ENCODE measurements at regions of chr3 and their contacts with region 1.

Region 1: DNA sequence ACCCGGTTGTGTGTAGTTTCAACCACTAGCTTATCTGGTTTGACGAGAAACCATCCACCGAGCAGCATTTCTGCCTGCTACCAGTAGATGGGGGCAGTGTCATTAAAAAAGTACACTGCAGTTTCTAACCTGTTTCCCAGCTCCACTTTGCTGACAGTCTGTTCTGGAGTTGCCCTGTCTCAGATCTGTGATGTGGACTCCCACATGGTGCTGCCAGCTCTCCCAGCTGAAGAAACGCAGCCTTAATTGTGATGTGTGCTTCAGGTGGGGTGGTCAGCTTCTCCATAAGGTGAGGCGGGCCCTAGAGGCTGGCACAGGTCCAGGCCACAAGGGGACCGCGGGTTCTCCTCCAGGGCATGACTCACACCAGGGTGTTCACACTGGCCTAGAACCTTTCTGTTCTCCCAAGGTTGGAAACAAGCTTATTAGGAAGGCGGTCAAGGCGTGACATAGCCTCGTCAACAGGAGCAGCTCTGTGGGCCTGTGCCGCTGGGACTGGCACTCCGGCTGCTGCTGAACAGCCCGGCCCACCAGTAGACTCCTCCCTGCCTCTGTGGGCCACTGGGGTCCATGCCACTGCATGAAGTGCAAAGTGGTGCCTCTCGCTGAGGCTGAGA is 2.9 kb upstream of the FAM43A start:
- DNase-seq: peak; percentile 84
- ATAC-seq: peak; percentile 68
- H3K4me3 Mint-ChIP-seq: no peak overlapping the region
- H3K27ac Mint-ChIP-seq: no peak overlapping the region
- H3K4me1 Mint-ChIP-seq: peaks cover 34% of the 10 kb centered on the region
- H3K27me3 Mint-ChIP-seq: peaks cover 16% of the 10 kb centered on the region
- CTCF ChIP-seq: peak; percentile 85

Region 2: DNA sequence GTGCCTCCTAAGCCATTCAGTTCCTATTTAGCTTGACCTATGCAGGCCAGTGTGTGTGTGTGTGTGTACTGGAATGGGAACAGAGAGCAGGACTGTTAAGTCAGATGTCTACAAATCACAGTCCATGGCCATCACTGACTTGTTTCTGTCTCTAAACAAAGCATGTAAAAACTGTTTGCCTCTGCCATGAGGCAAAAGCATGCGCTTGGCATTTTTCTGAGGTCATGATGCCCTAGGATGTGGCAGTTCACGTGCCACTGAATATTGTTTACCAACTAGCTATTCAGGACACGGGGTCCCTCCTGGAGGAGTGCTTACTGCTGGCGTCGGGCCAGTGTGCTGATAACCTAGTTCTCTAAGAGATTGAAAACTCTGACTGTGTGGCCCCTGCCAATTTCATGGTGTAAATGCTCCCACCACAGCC is 187.8 kb before region 1 on chr3:
- CTCF ChIA-PET with region 1: no interaction called
- POLR2A ChIA-PET with region 1: no interaction called
- intact Hi-C with region 1: no loop called
- DNase-seq: no peak
- ATAC-seq: no peak
- H3K4me3 Mint-ChIP-seq: no peak overlapping the region
- H3K27ac Mint-ChIP-seq: no peak overlapping the region
- H3K4me1 Mint-ChIP-seq: peaks cover 13% of the 10 kb centered on the region
- H3K27me3 Mint-ChIP-seq: no peaks in the 10 kb centered on the region
- CTCF ChIP-seq: no peak

Region 3: GRCh38 chr3:194536871-194537637 is 145.7 kb before region 1 on chr3:
- CTCF ChIA-PET with region 1: no interaction called
- POLR2A ChIA-PET with region 1: no interaction called
- intact Hi-C with region 1: no loop called
- DNase-seq: no peak
- ATAC-seq: no peak
- H3K4me3 Mint-ChIP-seq: no peak overlapping the region
- H3K27ac Mint-ChIP-seq: no peak overlapping the region
- H3K4me1 Mint-ChIP-seq: peaks cover 13% of the 10 kb centered on the region
- H3K27me3 Mint-ChIP-seq: no peaks in the 10 kb centered on the region
- CTCF ChIP-seq: no peak

Region 4: DNA sequence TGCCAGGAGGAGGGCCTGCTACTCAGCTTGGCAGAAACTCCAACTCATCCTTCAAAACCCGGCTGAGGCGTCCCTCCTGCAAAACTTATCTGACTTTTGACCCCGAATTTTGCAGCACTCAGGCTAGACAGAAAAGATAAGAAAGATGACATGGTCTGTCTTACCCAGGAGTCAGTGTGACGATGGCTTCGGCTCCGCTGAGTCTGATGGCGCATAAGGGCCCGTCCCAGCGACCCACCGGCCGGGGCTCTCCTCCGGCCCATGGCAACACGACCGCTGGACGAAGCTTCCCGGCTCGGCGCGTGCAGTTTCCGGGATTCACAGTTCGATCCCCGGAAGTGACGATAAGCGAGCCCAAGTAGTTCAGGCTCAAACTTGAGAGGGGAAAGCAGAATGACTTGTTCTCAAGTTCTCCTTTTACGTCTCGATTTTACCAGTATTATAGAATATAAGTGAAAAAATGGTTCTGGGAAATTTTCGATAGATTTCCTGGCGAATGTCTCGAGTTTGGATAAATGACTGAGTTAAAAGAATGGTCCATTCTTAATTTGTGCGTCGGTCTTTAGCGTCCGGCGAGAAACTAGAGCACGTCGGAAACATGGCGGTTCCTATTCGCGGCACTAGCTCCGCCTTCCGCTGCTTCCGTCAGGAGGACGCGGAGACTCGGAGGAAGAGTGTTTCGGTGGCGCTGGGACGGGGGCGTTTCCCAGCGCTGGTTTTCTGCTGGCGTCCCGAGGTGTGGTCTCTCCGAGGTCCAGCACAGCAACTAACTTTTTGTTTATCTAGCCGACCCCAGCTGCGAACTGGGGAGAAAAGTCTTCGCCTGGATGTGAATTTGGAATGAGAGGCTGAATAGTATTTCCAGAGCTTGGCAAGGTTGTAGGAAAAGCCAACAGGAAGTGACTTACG is 10.6 kb before region 1 on chr3 and contains the start of gene LSG1:
- CTCF ChIA-PET with region 1: interaction called, 199 read pairs
- POLR2A ChIA-PET with region 1: interaction called, 28 read pairs
- intact Hi-C with region 1: no loop called
- DNase-seq: peak; percentile 94
- ATAC-seq: peak; percentile 88
- H3K4me3 Mint-ChIP-seq: peak within 1 kb of the TSS; percentile 94
- H3K27ac Mint-ChIP-seq: peak within 1 kb of the TSS; percentile 98
- H3K4me1 Mint-ChIP-seq: peaks cover 59% of the 10 kb centered on the region
- H3K27me3 Mint-ChIP-seq: peaks cover 2% of the 10 kb centered on the region
- CTCF ChIP-seq: no peak
- total RNA-seq, gene LSG1: 36.5 to 41.3 TPM

Region 5: DNA sequence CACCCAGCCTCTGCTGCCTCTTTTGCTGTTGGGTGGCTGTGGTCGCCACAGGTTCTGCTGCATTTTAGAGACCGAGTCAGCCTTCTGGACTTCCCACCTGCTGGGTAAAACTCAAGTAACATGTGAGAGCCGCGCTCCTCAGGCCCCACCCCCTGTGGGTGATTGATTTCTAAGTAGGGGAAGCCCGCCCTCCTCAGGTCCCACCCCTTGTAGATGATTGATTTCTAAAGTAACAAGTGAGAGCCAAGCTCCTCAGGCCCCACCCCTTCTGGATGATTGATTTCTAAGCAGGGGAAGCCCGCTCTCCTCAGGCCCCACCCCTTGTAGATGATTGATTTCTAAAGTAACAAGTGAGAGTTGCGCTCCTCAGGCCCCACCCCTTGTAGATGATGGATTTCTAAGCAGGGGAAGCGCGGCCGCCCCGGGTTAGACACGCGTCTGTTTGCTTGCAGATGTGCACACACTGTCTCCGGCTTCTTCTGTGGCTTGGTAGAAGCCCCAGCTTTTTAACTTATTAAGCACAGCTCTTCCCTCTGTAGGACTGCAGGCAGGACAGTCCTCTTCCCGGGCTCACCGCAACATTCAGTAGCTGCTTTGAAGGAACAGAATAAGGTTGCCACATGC is 86.3 kb after region 1 on chr3:
- CTCF ChIA-PET with region 1: interaction called, 9 read pairs
- POLR2A ChIA-PET with region 1: interaction called, 4 read pairs
- intact Hi-C with region 1: loop called (anchors 5 kb)
- DNase-seq: peak; percentile 99
- ATAC-seq: peak; percentile 100
- H3K4me3 Mint-ChIP-seq: peak overlapping the region; percentile 69
- H3K27ac Mint-ChIP-seq: peak overlapping the region; percentile 86
- H3K4me1 Mint-ChIP-seq: peaks cover 19% of the 10 kb centered on the region
- H3K27me3 Mint-ChIP-seq: peaks cover 4% of the 10 kb centered on the region
- CTCF ChIP-seq: no peak

Measured in activated CD8-positive, alpha-beta T cell treated with anti-CD3 and anti-CD28 coated beads for 36 hours (primary cell).